Activated CD4-positive, alpha-beta T cell treated with anti-CD3 and anti-CD28 coated beads, Interleukin-2, amount 10 ng/mL, durations not matched to agents 24 days and 14 days (primary cell): ENCODE measurements at regions of chr3 and their contacts with region 1.

Region 1: GRCh38 chr3:129490242-129491045 is 38.0 kb upstream of the RHO start:
- DNase-seq: peak; percentile 85
- H3K4me3 Mint-ChIP-seq: no peak overlapping the region
- H3K27ac Mint-ChIP-seq: no peak overlapping the region
- H3K4me1 Mint-ChIP-seq: peaks cover 2% of the 10 kb centered on the region
- H3K27me3 Mint-ChIP-seq: no peaks in the 10 kb centered on the region

Region 2: GRCh38 chr3:129389572-129389937 is 100.9 kb before region 1 on chr3:
- intact Hi-C with region 1: no loop called
- DNase-seq: no peak
- H3K4me3 Mint-ChIP-seq: no peak overlapping the region
- H3K27ac Mint-ChIP-seq: peak overlapping the region; percentile 53
- H3K4me1 Mint-ChIP-seq: no peaks in the 10 kb centered on the region
- H3K27me3 Mint-ChIP-seq: no peaks in the 10 kb centered on the region

Region 3: GRCh38 chr3:129606636-129607390 is 116.4 kb after region 1 on chr3 and contains the start of gene PLXND1:
- intact Hi-C with region 1: loop called (anchors 10 kb)
- DNase-seq: peak; percentile 80
- H3K4me3 Mint-ChIP-seq: peak within 1 kb of the TSS; percentile 92
- H3K27ac Mint-ChIP-seq: peak within 1 kb of the TSS; percentile 92
- H3K4me1 Mint-ChIP-seq: peaks cover 13% of the 10 kb centered on the region
- H3K27me3 Mint-ChIP-seq: peaks cover 55% of the 10 kb centered on the region
- total RNA-seq, gene PLXND1: 1.6 and 1.7 TPM in 2 replicates

Region 4: DNA sequence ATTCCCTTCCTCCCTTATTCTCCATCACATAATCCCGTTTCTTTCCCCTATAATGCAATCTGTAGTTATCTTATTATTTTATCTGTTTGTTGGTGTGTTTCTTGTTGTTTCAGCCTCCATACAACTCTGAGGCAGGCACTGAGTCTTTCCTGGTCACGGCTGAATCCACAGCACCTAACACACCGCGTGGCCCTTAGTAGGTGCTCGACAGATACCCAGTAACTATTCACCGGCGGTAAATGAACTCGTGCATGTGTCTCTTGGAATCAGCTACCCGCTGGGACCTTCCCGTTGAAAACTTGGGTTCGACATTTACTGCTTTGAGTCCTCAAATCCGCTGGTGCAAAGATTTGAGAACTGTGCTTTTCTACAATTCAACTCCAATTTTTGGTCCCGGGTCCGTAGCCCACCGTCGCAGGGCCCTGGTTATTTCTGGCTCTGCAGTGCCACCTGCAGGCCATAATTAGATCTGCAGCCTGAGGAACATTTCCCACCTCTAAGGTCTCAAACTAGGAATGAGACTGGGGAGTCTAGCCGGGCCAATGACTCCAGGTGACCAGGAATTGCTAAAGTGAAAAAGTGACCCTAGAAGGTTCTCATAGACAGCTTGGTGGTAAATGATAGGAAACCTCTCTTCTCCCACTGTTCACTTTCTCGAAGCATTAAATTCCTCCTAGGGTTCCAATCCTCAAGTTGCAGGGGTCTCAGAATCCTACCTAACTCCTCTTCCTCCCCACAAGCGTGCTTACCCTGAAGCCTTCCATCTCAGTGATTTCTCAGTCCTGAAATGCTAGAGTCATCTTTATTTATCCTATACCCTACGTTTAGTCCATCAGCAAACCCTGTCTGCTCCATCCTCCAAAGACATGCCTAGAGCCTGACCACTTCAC is 444.0 kb after region 1 on chr3:
- intact Hi-C with region 1: loop called (anchors 1 kb)
- DNase-seq: peak; percentile 73
- H3K4me3 Mint-ChIP-seq: no peak overlapping the region
- H3K27ac Mint-ChIP-seq: no peak overlapping the region
- H3K4me1 Mint-ChIP-seq: peaks cover 6% of the 10 kb centered on the region
- H3K27me3 Mint-ChIP-seq: peaks cover 7% of the 10 kb centered on the region

Region 5: DNA sequence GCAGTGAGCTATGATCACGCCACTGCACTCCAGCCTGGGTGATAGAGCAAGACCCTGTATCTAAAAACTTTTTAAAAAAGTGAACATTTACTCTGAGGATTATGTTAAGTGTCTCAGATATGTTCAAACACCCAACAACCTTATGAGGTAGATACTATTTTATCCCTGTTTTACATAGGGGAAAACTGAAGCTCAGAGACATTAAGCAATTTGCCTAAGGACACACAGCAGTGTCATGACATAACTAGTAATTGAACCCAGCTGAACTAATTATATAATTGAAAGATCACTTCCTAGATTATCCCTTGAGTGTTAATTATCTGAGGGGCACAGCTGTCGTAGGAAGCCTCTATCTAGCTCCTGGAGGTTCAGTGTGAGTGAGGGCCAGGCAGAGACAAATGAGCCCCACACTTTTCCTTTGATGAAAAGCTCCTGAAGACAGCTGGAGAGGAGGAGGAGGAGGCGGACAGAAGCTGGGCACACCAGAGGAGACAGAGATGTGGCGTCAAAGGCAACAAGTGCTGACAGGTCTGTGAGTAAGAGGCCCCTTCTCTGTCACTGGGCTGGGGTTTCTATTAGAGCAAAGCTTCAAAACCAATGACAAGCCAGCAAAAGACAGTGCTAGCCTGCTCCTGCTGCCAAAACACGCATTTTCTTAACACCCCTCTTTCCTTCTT is 504.6 kb after region 1 on chr3:
- intact Hi-C with region 1: loop called (anchors 5 kb)
- DNase-seq: no peak
- H3K4me3 Mint-ChIP-seq: no peak overlapping the region
- H3K27ac Mint-ChIP-seq: no peak overlapping the region
- H3K4me1 Mint-ChIP-seq: no peaks in the 10 kb centered on the region
- H3K27me3 Mint-ChIP-seq: peaks cover 37% of the 10 kb centered on the region